ENCODE measurements at regions of chr11 and their contacts with region 1.

Region 1: DNA sequence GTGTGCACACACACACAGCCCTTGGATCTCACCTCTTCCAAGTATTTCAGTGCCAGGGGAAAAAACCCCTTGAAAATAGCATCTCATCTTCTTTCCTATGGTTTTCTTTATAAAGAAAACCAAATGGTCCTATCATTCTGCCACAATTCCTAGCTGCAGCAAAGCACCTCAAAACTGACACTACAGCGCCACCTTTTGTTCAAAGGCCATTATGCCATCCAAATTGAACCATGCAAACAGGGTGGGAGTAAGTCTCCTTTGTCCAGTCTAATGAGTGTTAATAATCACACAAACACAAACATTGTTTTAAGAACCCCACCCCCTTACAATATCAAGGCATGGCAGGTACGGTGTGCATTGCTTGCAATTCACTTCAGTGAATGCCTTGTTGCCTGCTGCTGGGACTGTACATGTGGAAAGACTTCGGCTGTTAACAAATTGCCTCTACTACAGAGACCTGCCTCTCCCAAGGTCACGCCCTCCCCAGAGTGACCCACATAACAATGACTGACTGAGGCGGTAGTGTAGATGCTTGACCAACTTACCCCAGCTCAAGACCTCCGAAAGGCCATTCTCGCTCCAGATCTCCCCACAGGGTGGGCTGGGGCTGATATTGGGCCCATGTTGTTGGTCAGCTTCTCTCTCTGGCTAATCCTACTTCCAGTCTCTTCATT is 31.7 kb downstream of the FAM181B start:
- DNase-seq: no peak
- H3K4me3 ChIP-seq: no peak overlapping the region
- H3K27ac ChIP-seq: no peak overlapping the region
- H3K27me3 ChIP-seq: no peaks in the 10 kb centered on the region
- CTCF ChIP-seq: peak; percentile 59

Region 2: GRCh38 chr11:82680266-82680665 is 21.7 kb before region 1 on chr11:
- CTCF ChIA-PET with region 1: interaction called, 18 read pairs
- POLR2A ChIA-PET with region 1: no interaction called
- DNase-seq: no peak
- H3K4me3 ChIP-seq: no peak overlapping the region
- H3K27ac ChIP-seq: no peak overlapping the region
- H3K27me3 ChIP-seq: no peaks in the 10 kb centered on the region
- CTCF ChIP-seq: no peak

Region 3: DNA sequence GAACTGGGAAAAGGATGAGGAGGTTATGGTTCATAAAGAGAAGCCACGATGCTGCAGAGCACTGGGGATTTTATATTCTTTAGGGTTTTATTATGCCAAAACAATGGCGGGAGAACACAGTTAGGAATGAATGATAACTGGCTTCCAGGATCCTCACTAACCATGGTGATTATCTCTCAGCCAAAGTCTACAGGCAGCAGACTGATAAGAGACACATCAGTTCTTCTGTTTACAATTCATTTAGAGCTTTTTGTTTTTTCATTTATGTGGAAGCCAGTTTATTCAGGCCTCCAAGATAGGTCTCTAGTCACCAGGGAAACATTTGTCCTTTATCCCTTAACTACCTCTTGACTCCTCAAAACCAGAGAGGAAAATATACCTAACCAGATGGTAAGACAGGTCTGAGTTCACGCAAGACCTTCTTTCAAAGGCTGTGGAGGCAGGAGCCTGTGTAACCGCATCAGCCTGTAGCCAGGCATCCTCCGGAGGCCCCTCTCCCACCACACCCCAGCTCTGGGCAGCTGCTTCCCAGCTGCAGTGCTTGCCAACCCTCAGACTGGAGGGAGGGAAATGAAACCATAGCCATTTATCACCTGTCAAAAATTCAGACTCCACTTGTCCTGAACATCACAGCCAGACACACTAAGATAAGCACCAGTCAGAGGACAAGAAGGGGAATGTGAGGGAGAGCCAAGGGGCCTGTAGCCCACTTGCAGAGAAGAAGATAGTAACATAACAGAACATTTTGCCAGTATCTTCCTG is 88.9 kb after region 1 on chr11:
- CTCF ChIA-PET with region 1: no interaction called
- POLR2A ChIA-PET with region 1: no interaction called
- DNase-seq: no peak
- H3K4me3 ChIP-seq: no peak overlapping the region
- H3K27ac ChIP-seq: no peak overlapping the region
- H3K27me3 ChIP-seq: no peaks in the 10 kb centered on the region
- CTCF ChIP-seq: no peak

Measured in AG04450 (cell line).